MCF 10A (cell line): ENCODE measurements at regions of chr7 and their contacts with region 1.

Region 1: DNA sequence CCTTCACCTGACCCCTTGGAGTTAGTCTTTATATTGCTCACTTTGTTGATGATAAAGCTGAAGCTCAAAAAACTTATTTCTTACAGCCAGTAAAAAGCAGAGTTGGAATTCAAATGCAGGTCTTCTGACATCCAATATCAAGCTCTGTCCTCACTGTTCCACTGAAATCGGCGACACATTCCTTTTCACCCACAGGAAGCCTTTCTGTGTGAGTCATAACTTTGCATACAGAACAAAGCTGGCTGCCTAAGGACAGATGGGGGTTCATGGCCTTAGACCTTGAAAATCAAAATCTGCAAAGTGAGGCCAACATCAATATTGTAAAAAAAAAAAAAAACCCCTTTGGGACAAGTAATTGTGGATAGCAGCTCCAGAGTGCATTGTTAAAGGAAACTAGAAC is 21.8 kb upstream of the AKR1B1 start:
- DNase-seq: peak; percentile 67
- H3K4me3 Mint-ChIP-seq: no peak overlapping the region
- H3K27ac Mint-ChIP-seq: no peak overlapping the region
- H3K4me1 Mint-ChIP-seq: peaks cover 15% of the 10 kb centered on the region
- H3K27me3 Mint-ChIP-seq: no peaks in the 10 kb centered on the region
- CTCF ChIP-seq: no peak

Region 2: DNA sequence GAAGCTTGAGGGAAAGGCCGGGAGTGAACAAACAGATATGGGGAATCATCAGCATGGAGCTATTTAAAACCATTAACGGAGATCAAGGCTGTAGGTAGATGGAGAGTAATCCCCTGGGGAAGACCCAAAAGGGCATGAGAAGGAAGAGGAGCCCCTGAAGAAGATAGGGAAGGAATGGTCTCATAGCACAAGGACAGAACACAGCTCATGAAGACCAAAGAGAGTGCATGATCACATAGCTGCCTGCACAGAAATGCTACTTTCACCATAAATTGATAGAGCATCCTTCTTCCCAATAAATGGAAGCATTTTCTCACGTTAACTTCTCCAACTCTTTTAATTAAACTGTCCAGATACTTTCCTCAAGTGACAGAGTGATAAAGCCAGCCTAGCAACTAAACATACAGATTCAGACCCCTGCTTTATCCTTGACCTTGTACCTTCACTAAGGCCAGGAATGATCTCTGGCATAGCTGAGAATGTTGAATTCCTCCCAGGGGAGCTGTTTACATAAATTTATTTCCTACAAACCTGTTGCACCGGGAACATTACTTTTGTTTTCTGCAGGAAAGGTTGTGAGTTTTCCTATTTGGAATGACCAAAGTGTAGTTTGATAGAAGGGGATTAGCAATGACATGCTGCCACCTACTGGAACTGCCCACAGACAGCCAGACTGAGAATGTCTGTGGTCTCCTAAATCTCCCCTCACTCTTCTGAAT is 464.4 kb before region 1 on chr7:
- CTCF ChIA-PET with region 1: no interaction called
- POLR2A ChIA-PET with region 1: no interaction called
- intact Hi-C with region 1: no loop called
- DNase-seq: peak; percentile 33
- H3K4me3 Mint-ChIP-seq: no peak overlapping the region
- H3K27ac Mint-ChIP-seq: no peak overlapping the region
- H3K4me1 Mint-ChIP-seq: no peaks in the 10 kb centered on the region
- H3K27me3 Mint-ChIP-seq: no peaks in the 10 kb centered on the region
- CTCF ChIP-seq: peak; percentile 59

Region 3: GRCh38 chr7:134458806-134459698 is 21.7 kb before region 1 on chr7 and contains the start of gene AKR1B1:
- CTCF ChIA-PET with region 1: interaction called, 45 read pairs
- POLR2A ChIA-PET with region 1: interaction called, 6 read pairs
- intact Hi-C with region 1: loop called (anchors 2 kb)
- DNase-seq: peak; percentile 86
- H3K4me3 Mint-ChIP-seq: peak within 1 kb of the TSS; percentile 76
- H3K27ac Mint-ChIP-seq: peak within 1 kb of the TSS; percentile 61
- H3K4me1 Mint-ChIP-seq: peaks cover 29% of the 10 kb centered on the region
- H3K27me3 Mint-ChIP-seq: no peaks in the 10 kb centered on the region
- CTCF ChIP-seq: peak; percentile 18
- total RNA-seq, gene AKR1B1: 115 and 128 TPM in 2 replicates

Region 4: GRCh38 chr7:134660961-134661376 is 180.2 kb after region 1 on chr7:
- CTCF ChIA-PET with region 1: no interaction called
- POLR2A ChIA-PET with region 1: no interaction called
- intact Hi-C with region 1: no loop called
- DNase-seq: no peak
- H3K4me3 Mint-ChIP-seq: no peak overlapping the region
- H3K27ac Mint-ChIP-seq: peak overlapping the region; percentile 15
- H3K4me1 Mint-ChIP-seq: peaks cover 6% of the 10 kb centered on the region
- H3K27me3 Mint-ChIP-seq: no peaks in the 10 kb centered on the region
- CTCF ChIP-seq: no peak

Region 5: GRCh38 chr7:134757938-134758337 is 277.2 kb after region 1 on chr7:
- CTCF ChIA-PET with region 1: no interaction called
- POLR2A ChIA-PET with region 1: no interaction called
- intact Hi-C with region 1: no loop called
- DNase-seq: no peak
- H3K4me3 Mint-ChIP-seq: no peak overlapping the region
- H3K27ac Mint-ChIP-seq: no peak overlapping the region
- H3K4me1 Mint-ChIP-seq: no peaks in the 10 kb centered on the region
- H3K27me3 Mint-ChIP-seq: no peaks in the 10 kb centered on the region
- CTCF ChIP-seq: no peak